Caco-2 (cell line): ENCODE measurements at regions of chr18 and their contacts with region 1.

Region 1: GRCh38 chr18:47404845-47405244 is 153.4 kb upstream of the SKOR2 start:
- DNase-seq: no peak
- H3K4me3 ChIP-seq: no peak overlapping the region
- H3K4me3 Mint-ChIP-seq: no peak overlapping the region
- H3K27ac Mint-ChIP-seq: no peak overlapping the region
- H3K4me1 ChIP-seq: no peaks in the 10 kb centered on the region
- H3K4me1 Mint-ChIP-seq: no peaks in the 10 kb centered on the region
- H3K27me3 ChIP-seq: no peaks in the 10 kb centered on the region
- H3K27me3 Mint-ChIP-seq: peaks cover 8% of the 10 kb centered on the region
- CTCF ChIP-seq: no peak

Region 2: DNA sequence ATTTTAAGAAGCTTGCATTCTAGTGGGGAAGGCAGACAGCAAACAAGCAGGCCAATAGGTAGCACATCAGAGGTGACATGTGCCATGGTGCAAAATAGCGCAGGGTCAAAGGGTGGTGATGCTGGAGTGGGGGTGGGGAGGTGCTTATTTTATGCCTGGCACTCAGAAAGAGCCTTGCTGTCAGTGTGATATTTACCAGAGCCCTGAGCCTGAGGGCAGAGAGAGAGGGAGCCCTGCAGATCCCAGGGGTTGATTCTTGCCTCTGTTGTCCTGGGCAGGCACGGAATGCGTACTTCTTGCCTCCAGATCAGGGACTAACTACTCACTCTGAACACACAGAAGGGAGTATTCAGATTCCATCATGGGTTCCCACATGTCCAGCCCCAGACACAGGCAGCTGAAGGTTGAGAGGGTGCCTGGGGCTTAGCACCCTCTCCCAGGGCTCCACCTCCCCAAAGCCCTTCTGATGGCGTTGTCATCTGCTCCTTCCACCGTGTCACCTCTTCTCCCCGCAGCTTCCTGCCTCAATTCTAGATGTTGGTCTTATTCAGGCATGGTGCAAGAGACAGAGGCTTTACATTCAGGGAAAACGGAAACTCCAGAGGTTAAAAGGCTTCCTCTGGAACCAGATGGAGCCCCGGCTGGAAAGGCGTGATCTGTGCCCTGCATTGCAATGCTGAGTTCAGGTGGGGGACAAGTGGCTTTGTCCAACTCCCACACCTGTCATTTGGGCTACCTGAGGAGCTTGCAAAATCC is 1048.4 kb before region 1 on chr18:
- CTCF ChIA-PET with region 1: no interaction called
- POLR2A ChIA-PET with region 1: interaction called, 11 read pairs
- intact Hi-C with region 1: no loop called
- DNase-seq: no peak
- H3K4me3 ChIP-seq: no peak overlapping the region
- H3K4me3 Mint-ChIP-seq: no peak overlapping the region
- H3K27ac Mint-ChIP-seq: no peak overlapping the region
- H3K4me1 ChIP-seq: no peaks in the 10 kb centered on the region
- H3K4me1 Mint-ChIP-seq: no peaks in the 10 kb centered on the region
- H3K27me3 ChIP-seq: no peaks in the 10 kb centered on the region
- H3K27me3 Mint-ChIP-seq: no peaks in the 10 kb centered on the region
- CTCF ChIP-seq: no peak

Region 3: GRCh38 chr18:47795434-47795814 is 390.6 kb after region 1 on chr18:
- CTCF ChIA-PET with region 1: no interaction called
- POLR2A ChIA-PET with region 1: no interaction called
- intact Hi-C with region 1: no loop called
- DNase-seq: no peak
- H3K4me3 ChIP-seq: no peak overlapping the region
- H3K4me3 Mint-ChIP-seq: no peak overlapping the region
- H3K27ac Mint-ChIP-seq: no peak overlapping the region
- H3K4me1 ChIP-seq: no peaks in the 10 kb centered on the region
- H3K4me1 Mint-ChIP-seq: no peaks in the 10 kb centered on the region
- H3K27me3 ChIP-seq: no peaks in the 10 kb centered on the region
- H3K27me3 Mint-ChIP-seq: peaks cover 5% of the 10 kb centered on the region
- CTCF ChIP-seq: no peak